ENCODE measurements at regions of chr16 and their contacts with region 1.

Region 1: GRCh38 chr16:75198135-75198600 is 8.8 kb downstream of the CTRB2 start:
- DNase-seq: no peak
- ATAC-seq: no peak
- H3K4me3 ChIP-seq: no peak overlapping the region
- H3K4me3 Mint-ChIP-seq: no peak overlapping the region
- H3K27ac ChIP-seq: no peak overlapping the region
- H3K27ac Mint-ChIP-seq: no peak overlapping the region
- H3K4me1 ChIP-seq: peaks cover 0 to 14% of the 10 kb centered on the region in 2 donors
- H3K4me1 Mint-ChIP-seq: peaks cover 10 to 29% (median 22%) of the 10 kb centered on the region in 7 donors
- H3K27me3 ChIP-seq: peaks cover 0 to 3% of the 10 kb centered on the region in 2 donors
- H3K27me3 Mint-ChIP-seq: peaks cover 12 to 24% (median 14%) of the 10 kb centered on the region in 5 donors

Region 2: DNA sequence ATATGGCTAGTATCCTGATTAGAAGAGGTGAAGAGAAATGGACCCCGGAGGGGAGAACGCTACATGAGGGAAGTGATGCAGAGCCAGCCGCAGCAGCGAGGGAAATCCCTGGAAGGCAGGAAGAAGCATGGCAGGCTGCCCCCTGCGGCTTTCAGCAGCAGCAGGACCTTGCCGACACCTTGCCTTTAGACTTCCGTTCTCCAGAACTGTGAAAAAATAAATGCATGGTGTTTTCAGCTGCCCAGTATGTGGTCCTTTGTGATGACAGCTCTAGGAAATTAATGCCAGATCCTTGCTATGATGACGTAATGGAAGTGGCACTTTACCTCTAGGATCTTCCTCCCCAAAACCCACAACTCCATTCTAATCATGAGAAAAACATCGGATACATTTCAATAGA is 59.5 kb before region 1 on chr16:
- CTCF ChIA-PET with region 1: no interaction called
- POLR2A ChIA-PET with region 1: no interaction called
- intact Hi-C with region 1: no loop called
- DNase-seq: no peak
- ATAC-seq: peak; percentile 47
- H3K4me3 ChIP-seq: no peak overlapping the region
- H3K4me3 Mint-ChIP-seq: peak overlapping the region in 4 of 10 donors; percentile 4 to 56 (median 28)
- H3K27ac ChIP-seq: no peak overlapping the region
- H3K27ac Mint-ChIP-seq: no peak overlapping the region
- H3K4me1 ChIP-seq: no peaks in the 10 kb centered on the region
- H3K4me1 Mint-ChIP-seq: peaks cover 0 to 7% (median 7%) of the 10 kb centered on the region in 7 donors
- H3K27me3 ChIP-seq: peaks cover 0 to 3% of the 10 kb centered on the region in 2 donors
- H3K27me3 Mint-ChIP-seq: peaks cover 0 to 8% (median 0%) of the 10 kb centered on the region in 5 donors

Region 3: GRCh38 chr16:75234856-75235696 is 36.9 kb after region 1 on chr16:
- CTCF ChIA-PET with region 1: interaction called, 14 read pairs
- POLR2A ChIA-PET with region 1: interaction called, 3 read pairs
- intact Hi-C with region 1: loop called (anchors 1 to 5 kb)
- DNase-seq: no peak
- ATAC-seq: no peak
- H3K4me3 ChIP-seq: no peak overlapping the region
- H3K4me3 Mint-ChIP-seq: no peak overlapping the region
- H3K27ac ChIP-seq: no peak overlapping the region
- H3K27ac Mint-ChIP-seq: no peak overlapping the region
- H3K4me1 ChIP-seq: no peaks in the 10 kb centered on the region
- H3K4me1 Mint-ChIP-seq: peaks cover 0 to 7% (median 4%) of the 10 kb centered on the region in 7 donors
- H3K27me3 ChIP-seq: no peaks in the 10 kb centered on the region
- H3K27me3 Mint-ChIP-seq: peaks cover 0 to 7% (median 0%) of the 10 kb centered on the region in 5 donors

Region 4: DNA sequence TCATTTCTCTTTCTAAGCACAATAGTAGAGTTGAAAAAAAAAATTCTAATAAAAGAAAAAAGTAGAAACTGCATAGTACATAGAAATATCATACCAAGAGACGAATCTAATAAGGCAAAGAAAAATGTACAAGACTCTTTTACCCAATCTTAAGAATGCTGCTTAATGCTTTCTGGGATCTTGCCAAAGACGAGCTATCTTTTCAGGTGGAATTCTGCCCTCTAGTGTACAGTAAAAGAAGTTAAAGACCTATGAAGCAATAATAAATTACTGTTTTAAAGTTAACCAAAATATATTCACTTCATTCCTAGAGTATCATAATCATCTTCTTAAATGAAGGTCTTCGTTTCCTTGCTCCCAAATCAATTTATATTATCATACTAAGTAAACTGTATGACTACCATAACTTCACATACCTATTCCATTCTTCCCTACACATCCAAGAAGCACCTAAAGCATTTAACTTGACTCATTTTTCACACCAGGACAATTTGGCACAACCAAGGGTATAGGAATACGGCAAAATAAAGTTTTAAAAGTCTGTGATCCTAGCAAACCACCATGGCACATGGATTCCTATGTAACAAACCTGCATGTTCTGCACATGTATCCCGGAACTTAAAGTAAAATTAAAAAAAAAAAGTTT is 187.5 kb after region 1 on chr16:
- CTCF ChIA-PET with region 1: interaction called, 18 read pairs
- POLR2A ChIA-PET with region 1: interaction called, 3 read pairs
- intact Hi-C with region 1: loop called (anchors 1 kb)
- DNase-seq: peak in 7 of 9 donors; percentile 35 to 71 (median 55)
- ATAC-seq: peak; percentile 67
- H3K4me3 ChIP-seq: no peak overlapping the region
- H3K4me3 Mint-ChIP-seq: no peak overlapping the region
- H3K27ac ChIP-seq: no peak overlapping the region
- H3K27ac Mint-ChIP-seq: peak overlapping the region in 1 of 9 donors; percentile 59
- H3K4me1 ChIP-seq: peaks cover 4 to 14% of the 10 kb centered on the region in 2 donors
- H3K4me1 Mint-ChIP-seq: peaks cover 9 to 25% (median 20%) of the 10 kb centered on the region in 7 donors
- H3K27me3 ChIP-seq: no peaks in the 10 kb centered on the region
- H3K27me3 Mint-ChIP-seq: peaks cover 0 to 17% (median 0%) of the 10 kb centered on the region in 5 donors

Region 5: GRCh38 chr16:75519881-75520280 is 321.7 kb after region 1 on chr16:
- CTCF ChIA-PET with region 1: no interaction called
- POLR2A ChIA-PET with region 1: no interaction called
- intact Hi-C with region 1: loop called (anchors 1 kb)
- DNase-seq: no peak
- ATAC-seq: no peak
- H3K4me3 ChIP-seq: no peak overlapping the region
- H3K4me3 Mint-ChIP-seq: no peak overlapping the region
- H3K27ac ChIP-seq: no peak overlapping the region
- H3K27ac Mint-ChIP-seq: no peak overlapping the region
- H3K4me1 ChIP-seq: peaks cover 0 to 3% of the 10 kb centered on the region in 2 donors
- H3K4me1 Mint-ChIP-seq: peaks cover 5 to 17% (median 13%) of the 10 kb centered on the region in 7 donors
- H3K27me3 ChIP-seq: no peaks in the 10 kb centered on the region
- H3K27me3 Mint-ChIP-seq: peaks cover 0 to 9% (median 0%) of the 10 kb centered on the region in 5 donors

Region 6: GRCh38 chr16:75764154-75764768 is 566.1 kb after region 1 on chr16:
- CTCF ChIA-PET with region 1: interaction called, 10 read pairs
- POLR2A ChIA-PET with region 1: no interaction called
- intact Hi-C with region 1: loop called in 1 of 2 experiments (anchors 1 kb)
- DNase-seq: peak in 8 of 9 donors; percentile 37 to 72 (median 63)
- ATAC-seq: peak; percentile 98
- H3K4me3 ChIP-seq: no peak overlapping the region
- H3K4me3 Mint-ChIP-seq: no peak overlapping the region
- H3K27ac ChIP-seq: no peak overlapping the region
- H3K27ac Mint-ChIP-seq: peak overlapping the region in 5 of 9 donors; percentile 8 to 55 (median 19)
- H3K4me1 ChIP-seq: no peaks in the 10 kb centered on the region
- H3K4me1 Mint-ChIP-seq: peaks cover 0 to 5% (median 0%) of the 10 kb centered on the region in 7 donors
- H3K27me3 ChIP-seq: no peaks in the 10 kb centered on the region
- H3K27me3 Mint-ChIP-seq: peaks cover 0 to 20% (median 13%) of the 10 kb centered on the region in 5 donors